ENCODE measurements at regions of chr4 and their contacts with region 1.

Region 1: GRCh38 chr4:4379540-4380087 is 7.3 kb upstream of the NSG1 start:
- DNase-seq: no peak
- H3K4me3 ChIP-seq: no peak overlapping the region
- H3K4me3 Mint-ChIP-seq: no peak overlapping the region
- H3K27ac Mint-ChIP-seq: no peak overlapping the region
- H3K4me1 ChIP-seq: no peaks in the 10 kb centered on the region
- H3K4me1 Mint-ChIP-seq: no peaks in the 10 kb centered on the region
- H3K27me3 ChIP-seq: no peaks in the 10 kb centered on the region; the same call in none of the 2 replicates
- H3K27me3 Mint-ChIP-seq: peaks cover 32% of the 10 kb centered on the region
- CTCF ChIP-seq: peak in 1 of 2 experiments; percentile 5

Region 2: GRCh38 chr4:4260253-4260652 is 119.4 kb before region 1 on chr4:
- CTCF ChIA-PET with region 1: no interaction called
- POLR2A ChIA-PET with region 1: no interaction called
- intact Hi-C with region 1: no loop called
- DNase-seq: peak in 1 of 2 experiments; percentile 14
- H3K4me3 ChIP-seq: no peak overlapping the region
- H3K4me3 Mint-ChIP-seq: no peak overlapping the region
- H3K27ac Mint-ChIP-seq: peak overlapping the region; percentile 32
- H3K4me1 ChIP-seq: peaks cover 15% of the 10 kb centered on the region
- H3K4me1 Mint-ChIP-seq: peaks cover 6% of the 10 kb centered on the region
- H3K27me3 ChIP-seq: no peaks in the 10 kb centered on the region
- H3K27me3 Mint-ChIP-seq: no peaks in the 10 kb centered on the region
- CTCF ChIP-seq: peak in 1 of 2 experiments; percentile 32

Region 3: DNA sequence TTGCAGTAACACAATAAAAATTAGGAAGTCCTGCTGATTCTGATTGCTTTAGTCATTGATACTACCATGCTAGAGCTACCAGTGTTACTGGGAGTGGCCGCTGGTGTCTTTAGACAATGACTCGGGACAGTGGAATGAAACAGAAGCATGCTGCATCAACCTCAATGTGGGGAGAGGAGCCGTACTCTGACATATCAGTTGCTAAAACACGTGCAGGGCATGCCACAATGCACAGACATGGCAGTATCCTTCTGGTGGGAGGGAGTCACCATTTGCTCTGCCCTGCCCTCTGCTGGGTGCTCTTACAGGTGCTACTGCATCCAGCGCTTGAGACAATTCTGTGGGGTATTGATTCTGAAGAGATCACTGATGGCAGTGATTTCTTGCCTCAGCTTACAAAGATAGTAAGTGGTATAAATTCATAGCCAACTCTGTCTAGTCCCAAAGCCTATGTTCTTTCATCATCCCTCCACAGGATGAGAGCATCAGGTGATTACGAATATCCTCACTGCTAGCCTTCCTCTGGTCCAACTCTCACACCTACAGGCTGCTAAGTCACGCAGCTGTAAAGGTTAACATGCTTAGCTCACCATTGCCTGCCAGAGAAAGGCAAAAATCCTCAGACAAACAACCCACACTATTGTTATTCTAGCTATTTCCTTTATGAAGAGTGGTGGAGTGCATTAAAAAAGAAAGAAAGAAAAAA is 51.0 kb after region 1 on chr4:
- CTCF ChIA-PET with region 1: no interaction called
- POLR2A ChIA-PET with region 1: no interaction called
- intact Hi-C with region 1: loop called (anchors 1 kb)
- DNase-seq: peak; percentile 53 to 65
- H3K4me3 ChIP-seq: no peak overlapping the region
- H3K4me3 Mint-ChIP-seq: no peak overlapping the region
- H3K27ac Mint-ChIP-seq: no peak overlapping the region
- H3K4me1 ChIP-seq: peaks cover 4% of the 10 kb centered on the region; the same call in 1 of the 2 replicates
- H3K4me1 Mint-ChIP-seq: no peaks in the 10 kb centered on the region
- H3K27me3 ChIP-seq: no peaks in the 10 kb centered on the region
- H3K27me3 Mint-ChIP-seq: no peaks in the 10 kb centered on the region
- CTCF ChIP-seq: peak; percentile 57 to 77

Measured in Caco-2 (cell line).